GM13976 (cell line): ENCODE measurements at regions of chr6 and their contacts with region 1.

Region 1: DNA sequence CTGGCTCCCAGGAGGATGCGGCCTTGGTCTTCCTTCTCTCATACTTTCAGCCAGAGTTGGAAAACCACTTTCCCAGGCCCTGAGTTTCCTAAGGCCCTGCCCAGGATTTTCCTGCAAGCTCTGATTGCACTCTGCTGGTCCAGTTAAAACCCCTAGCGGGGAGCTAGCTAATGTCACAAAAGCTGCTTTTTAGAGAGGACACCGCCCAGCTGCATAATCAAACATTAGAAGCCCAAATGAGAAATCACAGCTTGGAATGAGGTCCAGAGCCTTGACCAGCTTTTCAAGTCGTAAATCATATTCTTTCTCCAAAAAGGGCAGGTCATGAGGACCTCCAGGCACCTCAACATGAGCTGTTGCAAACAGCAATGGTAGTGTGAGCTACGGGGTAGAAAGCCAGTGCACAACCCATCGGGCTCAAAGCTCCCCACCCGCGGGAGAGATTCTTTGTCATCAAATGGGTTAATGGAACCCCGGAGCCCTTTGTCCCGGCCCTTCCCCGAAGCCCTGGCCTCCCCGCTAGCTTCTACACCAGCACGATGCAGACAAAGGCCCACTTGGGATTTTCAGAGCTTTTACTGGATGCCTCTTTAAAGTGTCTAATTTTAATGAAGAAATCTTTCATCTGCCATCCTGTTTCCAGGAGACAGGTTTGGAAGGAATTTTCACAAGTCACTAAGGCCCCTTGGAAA is 134.0 kb downstream of the SCML4 start:
- DNase-seq: no peak
- CTCF ChIP-seq: no peak

Region 2: DNA sequence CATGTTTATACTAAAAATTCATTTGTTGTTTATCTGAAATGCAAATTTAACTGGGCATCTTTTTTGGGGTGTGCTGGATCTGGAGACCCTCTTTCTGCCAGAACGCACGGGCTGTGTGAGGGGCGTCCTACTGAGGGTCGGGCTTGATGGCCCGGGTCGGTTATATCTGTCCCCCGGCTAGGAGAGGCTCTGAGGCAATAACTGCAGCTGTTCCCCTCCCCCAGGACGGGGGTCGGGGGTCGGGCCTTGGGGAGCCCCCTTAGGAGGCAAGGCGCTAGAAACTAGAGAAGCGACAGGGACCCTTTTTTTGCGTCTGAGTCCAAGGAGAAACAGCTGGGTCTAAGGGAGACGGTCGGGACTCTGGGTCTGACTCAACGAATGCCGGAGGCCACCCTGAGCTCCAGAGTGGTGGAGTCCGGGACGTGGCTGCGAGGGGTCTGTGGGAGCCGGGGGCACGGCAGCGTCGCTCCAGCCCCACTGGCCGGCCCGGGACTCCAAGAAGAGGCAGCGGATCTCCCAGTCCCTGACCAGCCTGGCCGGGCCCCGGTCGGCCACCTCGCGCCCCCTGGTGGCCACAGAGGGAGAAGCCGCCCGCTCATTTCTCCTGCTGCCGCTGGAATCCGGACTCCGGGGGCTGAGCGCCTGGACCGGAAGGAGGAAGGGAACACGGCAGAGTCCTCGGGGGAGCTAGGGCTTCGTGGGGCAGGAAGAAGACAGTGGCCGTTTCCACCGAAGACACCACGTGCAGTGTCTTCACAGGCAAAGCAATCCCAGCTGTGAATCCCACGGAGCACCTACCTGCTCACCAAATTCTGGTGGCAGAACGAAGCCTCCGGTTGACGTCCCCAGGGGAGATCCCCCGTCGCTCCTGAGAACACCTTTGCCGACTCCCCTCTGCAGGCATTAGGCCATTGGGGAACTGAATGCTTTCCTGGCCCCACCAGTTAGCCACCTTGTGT is 158.0 kb after region 1 on chr6:
- in situ Hi-C with region 1: loop called (anchors 10 kb)
- DNase-seq: peak; percentile 90
- CTCF ChIP-seq: peak; percentile 93